GM13977 (cell line): ENCODE measurements at regions of chr1 and their contacts with region 1.

Region 1: GRCh38 chr1:206734499-206735142 is 36.0 kb upstream of the IL19 start:
- DNase-seq: peak; percentile 76
- CTCF ChIP-seq: peak; percentile 87

Region 2: GRCh38 chr1:206808615-206809014 is 74.0 kb after region 1 on chr1:
- in situ Hi-C with region 1: loop called (anchors 5 kb)
- DNase-seq: no peak
- CTCF ChIP-seq: peak; percentile 68

Region 3: GRCh38 chr1:207205614-207206061 is 471.0 kb after region 1 on chr1:
- in situ Hi-C with region 1: no loop called
- DNase-seq: no peak
- CTCF ChIP-seq: no peak